ENCODE measurements at regions of chr7 and their contacts with region 1.

Region 1: DNA sequence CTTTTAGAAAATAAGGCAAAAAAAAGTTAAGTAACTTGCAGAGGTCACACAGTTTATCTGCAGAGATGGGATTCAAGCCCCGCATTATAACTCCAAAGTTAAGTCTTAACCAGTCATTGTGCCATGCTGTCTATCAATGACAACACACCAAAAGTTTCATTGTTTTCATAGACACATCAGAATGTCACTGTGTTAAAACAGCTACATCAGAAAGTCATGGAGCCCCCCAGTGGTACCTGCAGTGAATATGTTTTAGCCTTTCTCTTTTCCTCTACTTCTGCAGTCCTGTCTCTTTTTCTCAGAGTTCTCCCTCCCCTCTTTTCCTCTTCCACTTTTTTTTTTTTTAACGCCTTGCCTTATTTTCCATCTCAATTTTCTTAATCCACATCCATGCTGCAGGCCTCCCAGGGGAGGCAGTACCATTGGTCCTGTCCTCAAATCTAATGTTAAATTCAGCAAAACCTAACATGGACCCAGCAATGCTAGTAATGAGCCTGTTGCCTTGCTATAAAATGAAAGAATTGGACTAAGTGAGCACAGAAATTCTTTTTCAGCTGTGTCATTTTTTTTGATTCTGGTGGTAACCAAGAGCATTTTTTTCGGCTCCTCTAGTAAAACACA is 3.8 kb upstream of the NRCAM start:
- DNase-seq: peak in 2 of 10 donors; percentile 53 to 60
- H3K4me3 ChIP-seq: no peak overlapping the region
- H3K27ac ChIP-seq: peak overlapping the region in 13 of 59 donors; percentile 3 to 83 (median 53)
- H3K27me3 ChIP-seq: peaks cover 0 to 16% (median 0%) of the 10 kb centered on the region in 45 donors
- CTCF ChIP-seq: peak in 54 of 56 donors; percentile 11 to 67 (median 51)

Region 2: DNA sequence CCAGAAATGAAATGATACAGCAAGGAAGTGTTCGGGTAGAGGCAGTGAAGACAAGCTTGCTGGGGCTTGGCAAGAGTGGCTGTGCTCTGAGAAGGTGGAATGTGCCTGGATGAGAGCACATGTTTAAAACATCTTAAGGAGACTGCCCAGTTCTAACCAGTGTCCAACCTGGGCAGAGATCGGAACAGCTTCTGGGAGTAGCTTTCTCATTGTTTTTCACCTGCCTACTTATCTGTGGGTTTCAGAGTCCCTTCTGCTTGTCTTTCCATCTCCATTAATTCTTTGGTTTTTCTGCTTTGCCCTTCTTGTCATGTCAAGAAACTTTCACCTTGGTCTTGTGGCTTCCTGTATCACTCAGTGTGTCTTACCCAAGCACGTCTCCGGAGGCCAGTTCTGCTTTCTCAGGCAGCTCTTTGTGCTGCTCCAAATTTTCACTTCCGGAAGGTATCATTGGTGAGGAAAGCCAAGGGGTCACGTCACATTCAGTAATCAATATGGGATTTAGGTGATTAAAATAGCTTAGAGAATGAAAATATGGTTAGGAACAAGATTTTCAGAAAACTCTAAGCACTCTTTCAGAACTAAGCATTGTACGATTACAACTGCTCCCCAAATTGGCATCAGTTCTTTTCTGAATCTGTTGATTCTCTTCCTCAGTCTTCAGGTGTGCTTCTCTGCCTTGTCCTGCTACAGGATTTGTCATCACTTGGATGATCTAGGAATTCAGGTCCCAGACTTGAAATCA is 324.4 kb before region 1 on chr7:
- intact Hi-C with region 1: no loop called
- DNase-seq: no peak
- H3K4me3 ChIP-seq: no peak overlapping the region
- H3K27ac ChIP-seq: no peak overlapping the region
- H3K27me3 ChIP-seq: no peaks in the 10 kb centered on the region
- CTCF ChIP-seq: no peak

Region 3: GRCh38 chr7:108181073-108181985 is 278.7 kb before region 1 on chr7:
- intact Hi-C with region 1: loop called in 1 of 2 experiments (anchors 10 kb)
- DNase-seq: no peak
- H3K4me3 ChIP-seq: no peak overlapping the region
- H3K27ac ChIP-seq: no peak overlapping the region
- H3K27me3 ChIP-seq: no peaks in the 10 kb centered on the region
- CTCF ChIP-seq: peak; percentile 67 to 93 (median 82)

Region 4: DNA sequence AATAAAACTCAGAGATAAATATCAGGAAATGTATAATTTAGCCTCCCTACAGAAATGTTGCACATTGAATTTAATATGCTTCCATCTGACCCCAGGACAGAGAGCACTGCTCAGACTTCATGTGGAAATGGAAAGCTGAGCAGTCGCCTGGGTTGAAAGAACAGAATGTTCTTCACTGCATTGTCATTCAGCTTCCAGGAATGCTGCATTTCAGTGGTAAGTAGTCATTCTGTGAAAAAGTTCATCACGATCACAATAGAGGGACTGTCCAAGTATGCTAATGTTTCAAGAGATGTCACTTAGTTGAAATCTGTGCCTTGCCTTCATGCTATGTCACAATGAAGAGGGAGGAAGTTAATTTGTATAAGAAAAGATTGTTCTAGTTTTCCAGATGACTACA is 151.1 kb before region 1 on chr7:
- intact Hi-C with region 1: loop called in 1 of 2 experiments (anchors 10 kb)
- DNase-seq: no peak
- H3K4me3 ChIP-seq: no peak overlapping the region
- H3K27ac ChIP-seq: peak overlapping the region in 48 of 59 donors; percentile 2 to 78 (median 49)
- H3K27me3 ChIP-seq: no peaks in the 10 kb centered on the region
- CTCF ChIP-seq: no peak